ENCODE measurements at regions of chr15 and their contacts with region 1.

Region 1: DNA sequence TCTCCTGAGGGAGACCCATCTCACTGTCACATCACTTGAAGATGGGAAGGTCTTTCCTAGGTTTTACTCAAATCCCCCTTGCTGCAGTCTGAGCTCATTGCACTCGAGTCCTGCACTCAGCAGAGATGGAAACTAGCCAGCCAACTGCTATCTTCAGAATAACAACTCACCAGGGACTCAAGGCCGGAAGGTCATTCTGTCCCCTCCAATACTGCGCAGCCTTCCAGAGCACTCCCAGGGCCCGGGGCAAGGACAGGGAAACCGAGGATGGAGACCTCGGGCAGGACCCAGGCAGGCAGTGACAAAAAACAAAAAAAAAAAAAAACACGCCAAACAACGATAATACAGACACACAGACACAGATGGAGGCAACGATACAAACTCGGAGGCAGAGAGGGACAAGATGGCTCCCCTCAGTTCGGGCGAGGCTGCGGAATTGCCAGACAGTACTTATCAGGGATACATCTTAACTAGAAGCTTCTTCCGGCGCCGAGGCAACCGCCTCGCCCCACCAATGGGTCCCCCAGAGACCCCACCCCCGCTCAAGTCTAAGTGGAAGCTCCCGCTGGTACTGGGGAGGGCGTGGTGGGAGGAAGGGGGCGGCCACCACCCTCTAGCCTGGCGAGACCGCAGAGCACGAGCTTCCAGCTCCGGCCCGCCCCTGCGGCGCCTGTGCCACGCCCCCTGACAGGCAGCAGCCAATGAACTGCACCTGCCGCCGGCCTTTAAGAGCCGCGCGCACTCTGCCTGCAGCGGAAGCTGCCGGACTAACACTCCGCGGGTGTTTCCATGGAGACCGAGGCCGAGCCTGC is 7.0 kb upstream of the MAP1A start:
- DNase-seq: peak; percentile 85
- ATAC-seq: peak; percentile 99
- H3K4me3 ChIP-seq: peak overlapping the region; percentile 76
- H3K27ac ChIP-seq: peak overlapping the region; percentile 40
- H3K4me1 ChIP-seq: peaks cover 6% of the 10 kb centered on the region
- H3K27me3 ChIP-seq: peaks cover 0 to 3% of the 10 kb centered on the region in 2 experiments; a peak in 2 of 4 replicates
- CTCF ChIP-seq: 0 out of 6 replicates have a peak, but pooled peaks of 1 of the 3 experiments have one; percentile 21
- EP300 ChIP-seq: no peak
- POLR2A ChIP-seq: peak; percentile 80
- RAD21 ChIP-seq: no peak

Region 2: GRCh38 chr15:43105778-43106485 is 404.5 kb before region 1 on chr15 and contains the start of gene UBR1:
- CTCF ChIA-PET with region 1: no interaction called
- POLR2A ChIA-PET with region 1: no interaction called
- RAD21 ChIA-PET with region 1: no interaction called
- SMC1A ChIA-PET with region 1: no interaction called
- in situ Hi-C with region 1: no loop called
- intact Hi-C with region 1: no loop called
- DNase-seq: peak; percentile 69
- ATAC-seq: peak; percentile 92
- H3K4me3 ChIP-seq: peak within 1 kb of the TSS; percentile 78
- H3K27ac ChIP-seq: peak within 1 kb of the TSS; percentile 82
- H3K4me1 ChIP-seq: no peaks in the 10 kb centered on the region; the same call in 1 of the 2 replicates
- H3K27me3 ChIP-seq: no peaks in the 10 kb centered on the region
- CTCF ChIP-seq: no peak
- EP300 ChIP-seq: no peak
- POLR2A ChIP-seq: peak; percentile 84
- RAD21 ChIP-seq: no peak
- polyA plus RNA-seq, gene UBR1: 4.5 to 5.5 TPM

Region 3: DNA sequence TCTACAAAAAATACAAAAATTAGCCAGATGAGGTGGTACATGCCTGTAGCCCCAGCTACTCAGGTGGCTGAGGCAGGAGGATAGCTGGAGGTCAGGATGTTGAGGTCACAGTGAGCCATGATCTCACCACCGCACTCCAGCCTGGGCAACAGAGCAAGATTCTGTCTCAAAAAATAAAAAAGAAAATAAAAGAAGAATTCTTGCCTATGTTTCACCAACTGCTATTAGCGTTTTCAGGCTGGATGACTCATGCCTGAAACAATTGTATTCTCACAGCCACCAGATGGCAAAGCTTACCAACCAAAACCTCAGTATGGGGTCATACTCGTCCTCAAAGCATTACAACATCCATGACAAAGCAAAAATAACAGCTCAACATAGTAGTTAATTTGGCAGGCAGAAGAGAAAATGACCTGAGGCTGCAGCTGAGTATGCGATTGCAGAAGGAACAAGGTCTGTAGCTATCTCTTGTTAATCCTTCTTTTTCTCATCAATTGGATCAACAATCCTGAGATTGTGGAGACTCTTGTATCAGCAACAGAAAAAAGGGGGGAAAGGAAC is 69.6 kb before region 1 on chr15:
- CTCF ChIA-PET with region 1: interaction called, 42 read pairs
- POLR2A ChIA-PET with region 1: no interaction called
- RAD21 ChIA-PET with region 1: interaction called, 29 read pairs
- SMC1A ChIA-PET with region 1: interaction called, 17 read pairs
- in situ Hi-C with region 1: no loop called
- intact Hi-C with region 1: loop called (anchors 5 kb)
- DNase-seq: peak; percentile 12
- ATAC-seq: peak; percentile 95
- H3K4me3 ChIP-seq: no peak overlapping the region
- H3K27ac ChIP-seq: no peak overlapping the region
- H3K4me1 ChIP-seq: peaks cover 7% of the 10 kb centered on the region; the same call in 1 of the 2 replicates
- H3K27me3 ChIP-seq: no peaks in the 10 kb centered on the region
- CTCF ChIP-seq: peak; percentile 23 to 66 (median 23); a peak in 3 of 6 replicates
- EP300 ChIP-seq: no peak
- POLR2A ChIP-seq: no peak
- RAD21 ChIP-seq: peak; percentile 50

Region 4: DNA sequence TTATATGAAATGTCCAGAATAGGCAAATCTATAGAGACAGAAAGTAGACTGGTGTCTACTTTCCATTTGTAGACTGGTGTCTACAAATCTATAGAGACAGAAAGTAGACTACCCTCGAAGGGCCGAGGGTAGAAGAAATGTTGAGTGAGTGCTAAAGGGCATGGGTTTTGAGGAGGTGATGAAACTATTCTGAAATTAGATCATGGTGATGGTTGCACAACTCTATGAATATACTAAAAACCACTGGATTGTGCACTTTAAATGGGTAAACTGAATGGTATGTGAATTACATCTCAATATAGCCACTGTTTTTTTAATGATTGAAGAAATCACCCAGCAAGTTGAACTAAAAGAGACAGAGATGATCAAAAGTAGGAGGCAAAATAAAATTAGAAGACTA is 45.3 kb before region 1 on chr15:
- CTCF ChIA-PET with region 1: interaction called, 12 read pairs
- POLR2A ChIA-PET with region 1: no interaction called
- RAD21 ChIA-PET with region 1: interaction called, 3 read pairs
- SMC1A ChIA-PET with region 1: interaction called, 7 read pairs
- in situ Hi-C with region 1: no loop called
- intact Hi-C with region 1: no loop called
- DNase-seq: no peak
- ATAC-seq: no peak
- H3K4me3 ChIP-seq: no peak overlapping the region
- H3K27ac ChIP-seq: no peak overlapping the region
- H3K4me1 ChIP-seq: no peaks in the 10 kb centered on the region
- H3K27me3 ChIP-seq: no peaks in the 10 kb centered on the region
- CTCF ChIP-seq: no peak
- EP300 ChIP-seq: no peak
- POLR2A ChIP-seq: no peak
- RAD21 ChIP-seq: no peak

Region 5: GRCh38 chr15:43483306-43484128 is 26.9 kb before region 1 on chr15:
- CTCF ChIA-PET with region 1: interaction called, 88 read pairs
- POLR2A ChIA-PET with region 1: interaction called, 3 read pairs
- RAD21 ChIA-PET with region 1: interaction called, 5 read pairs
- SMC1A ChIA-PET with region 1: interaction called, 26 read pairs
- in situ Hi-C with region 1: no loop called
- intact Hi-C with region 1: no loop called
- DNase-seq: no peak
- ATAC-seq: no peak; the same call in 2 of the 3 replicates
- H3K4me3 ChIP-seq: no peak overlapping the region
- H3K27ac ChIP-seq: no peak overlapping the region
- H3K4me1 ChIP-seq: no peaks in the 10 kb centered on the region
- H3K27me3 ChIP-seq: no peaks in the 10 kb centered on the region
- CTCF ChIP-seq: peak; percentile 12 to 36 (median 35); a peak in 4 of 6 replicates
- EP300 ChIP-seq: no peak
- POLR2A ChIP-seq: no peak
- RAD21 ChIP-seq: 0 out of 2 replicates have a peak, but pooled peaks have one; percentile 24

Region 6: GRCh38 chr15:43524254-43524845 is 13.9 kb after region 1 on chr15:
- CTCF ChIA-PET with region 1: interaction called, 11 read pairs
- POLR2A ChIA-PET with region 1: no interaction called
- RAD21 ChIA-PET with region 1: no interaction called
- SMC1A ChIA-PET with region 1: interaction called, 4 read pairs
- in situ Hi-C with region 1: no loop called
- intact Hi-C with region 1: no loop called
- DNase-seq: no peak
- ATAC-seq: peak; percentile 38
- H3K4me3 ChIP-seq: no peak overlapping the region
- H3K27ac ChIP-seq: no peak overlapping the region
- H3K4me1 ChIP-seq: no peaks in the 10 kb centered on the region
- H3K27me3 ChIP-seq: peaks cover 0 to 2% of the 10 kb centered on the region in 2 experiments; a peak in 2 of 4 replicates
- CTCF ChIP-seq: peak in 1 of 3 experiments; percentile 10; a peak in 1 of 6 replicates
- EP300 ChIP-seq: no peak
- POLR2A ChIP-seq: no peak
- RAD21 ChIP-seq: no peak

Measured in GM12878 (cell line).